SK-N-SH (cell line): ENCODE measurements at regions of chr13 and their contacts with region 1.

Region 1: DNA sequence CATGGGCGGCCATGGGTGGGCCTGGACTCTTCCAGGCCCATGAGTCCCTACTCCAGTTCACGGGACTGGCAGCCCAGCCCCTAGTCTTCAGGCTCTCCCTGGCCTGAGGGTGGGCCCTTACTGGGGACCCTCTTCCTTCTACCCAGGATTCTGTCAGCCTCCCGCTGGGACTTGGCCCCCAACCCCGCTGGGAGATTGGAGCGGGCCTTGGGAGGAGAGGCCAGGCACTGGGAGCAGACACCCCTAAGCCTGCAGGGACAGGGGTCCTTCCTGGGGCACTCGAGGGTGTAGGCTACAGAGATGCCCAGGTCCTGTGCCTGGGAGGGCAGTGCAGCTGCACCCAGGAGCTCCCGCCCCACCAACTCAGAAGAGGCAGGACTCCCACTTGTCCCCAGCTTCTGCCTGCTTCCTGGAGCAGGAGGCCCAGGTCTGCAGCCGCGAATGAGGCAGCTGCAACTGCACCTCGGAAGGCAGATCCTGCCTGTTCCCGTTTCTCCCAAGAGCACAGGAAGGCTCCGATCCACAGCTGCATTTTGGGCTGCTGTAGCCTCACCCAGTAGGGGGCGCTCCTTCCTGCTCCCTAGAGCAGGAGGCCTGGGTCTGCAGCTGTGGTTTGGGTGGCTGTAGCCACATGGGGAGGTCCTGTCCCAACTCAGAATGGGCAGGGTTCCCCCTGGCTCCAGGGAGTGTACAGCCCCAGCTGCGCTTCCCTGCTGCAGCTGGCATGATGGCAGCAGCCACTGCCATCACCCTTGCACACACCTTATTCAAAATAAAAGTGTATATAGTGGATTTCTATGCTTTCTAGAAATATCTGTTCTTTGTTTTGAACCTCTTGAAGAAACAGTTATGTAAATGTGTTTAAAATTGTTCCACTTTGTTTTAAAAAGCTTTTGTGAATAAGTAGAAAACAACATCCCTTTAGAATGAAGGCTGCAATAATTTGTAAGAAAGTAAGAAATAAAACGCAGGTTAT is 46.8 kb downstream of the TEX26 start:
- DNase-seq: peak; percentile 29
- H3K4me3 ChIP-seq: no peak overlapping the region; a peak in 1 of 4 replicates
- H3K27ac ChIP-seq: no peak overlapping the region
- H3K4me1 ChIP-seq: peaks cover 2 to 7% of the 10 kb centered on the region in 2 experiments; a peak in 2 of 4 replicates
- H3K27me3 ChIP-seq: no peaks in the 10 kb centered on the region
- CTCF ChIP-seq: peak; percentile 58
- EP300 ChIP-seq: no peak
- RAD21 ChIP-seq: peak; percentile 67

Region 2: DNA sequence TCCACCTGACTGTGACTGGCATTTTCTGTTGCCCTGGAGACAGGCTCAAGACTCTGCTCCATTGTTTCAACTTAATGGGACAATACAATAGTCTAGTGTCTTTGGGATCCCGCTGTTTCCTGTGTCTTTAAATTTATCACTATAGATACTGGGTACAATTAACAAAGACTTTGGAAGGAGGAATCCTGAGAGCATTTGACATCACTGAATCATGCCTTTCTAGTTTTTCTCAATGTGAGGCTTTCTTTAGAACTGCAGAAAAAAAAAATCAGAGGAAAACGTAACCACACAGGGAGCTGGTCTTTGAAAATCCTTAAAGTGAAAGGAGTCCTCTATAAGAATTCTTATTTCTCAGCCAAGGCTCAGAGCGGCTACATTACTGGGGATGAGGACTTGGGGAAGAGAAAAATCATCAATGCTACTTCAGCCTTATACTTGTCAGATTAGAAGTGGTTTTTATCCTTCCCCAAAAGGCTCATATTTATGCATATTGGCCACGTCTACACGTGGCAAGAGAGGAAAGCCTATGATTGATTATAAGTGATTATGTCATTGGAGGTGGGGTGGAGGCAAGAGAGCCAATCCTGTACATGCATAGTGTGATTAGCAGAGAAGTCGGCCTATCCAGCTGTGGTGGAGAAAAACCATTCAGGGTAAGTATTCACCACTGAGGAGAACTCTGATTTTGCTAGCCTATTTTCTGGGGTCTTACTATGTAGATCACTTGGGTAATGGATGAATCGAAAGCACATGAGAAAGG is 1094.4 kb before region 1 on chr13:
- CTCF ChIA-PET with region 1: no interaction called
- POLR2A ChIA-PET with region 1: no interaction called
- DNase-seq: no peak
- H3K4me3 ChIP-seq: no peak overlapping the region
- H3K27ac ChIP-seq: no peak overlapping the region
- H3K4me1 ChIP-seq: no peaks in the 10 kb centered on the region
- H3K27me3 ChIP-seq: no peaks in the 10 kb centered on the region
- CTCF ChIP-seq: no peak
- EP300 ChIP-seq: no peak
- RAD21 ChIP-seq: no peak

Region 3: DNA sequence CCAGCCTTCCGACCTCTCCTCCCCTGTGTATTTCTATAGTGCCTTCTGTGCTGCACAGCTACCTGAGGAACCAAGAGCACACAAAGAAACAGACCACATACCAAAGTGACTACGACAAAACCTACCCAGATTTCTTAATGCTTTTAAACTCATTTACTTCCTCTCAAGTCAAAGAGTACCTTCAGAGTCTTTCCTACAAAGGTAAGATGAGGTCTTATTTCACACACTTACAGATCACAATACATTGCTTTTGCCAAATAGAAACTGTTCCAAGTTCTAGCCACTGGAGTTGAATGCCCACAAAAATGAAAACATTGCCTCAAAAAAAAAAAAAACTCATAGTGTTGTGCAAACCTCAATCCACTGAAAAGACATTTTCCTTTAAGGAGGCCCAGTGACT is 10.4 kb before region 1 on chr13:
- CTCF ChIA-PET with region 1: interaction called, 22 read pairs
- POLR2A ChIA-PET with region 1: no interaction called
- DNase-seq: no peak
- H3K4me3 ChIP-seq: no peak overlapping the region
- H3K27ac ChIP-seq: no peak overlapping the region
- H3K4me1 ChIP-seq: peaks cover 0 to 14% of the 10 kb centered on the region in 2 experiments; a peak in 1 of 4 replicates
- H3K27me3 ChIP-seq: no peaks in the 10 kb centered on the region
- CTCF ChIP-seq: no peak
- EP300 ChIP-seq: no peak
- RAD21 ChIP-seq: no peak

Region 4: GRCh38 chr13:31012655-31013024 is 33.4 kb after region 1 on chr13:
- CTCF ChIA-PET with region 1: interaction called, 14 read pairs
- POLR2A ChIA-PET with region 1: no interaction called
- DNase-seq: peak; percentile 70
- H3K4me3 ChIP-seq: no peak overlapping the region
- H3K27ac ChIP-seq: peak overlapping the region in 1 of 2 experiments; percentile 58; a peak in 2 of 4 replicates
- H3K4me1 ChIP-seq: peaks cover 0 to 25% of the 10 kb centered on the region in 2 experiments; a peak in 2 of 4 replicates
- H3K27me3 ChIP-seq: no peaks in the 10 kb centered on the region
- CTCF ChIP-seq: peak; percentile 66
- EP300 ChIP-seq: no peak
- RAD21 ChIP-seq: peak; percentile 89